Adrenal gland (tissue), 19 donors: ENCODE measurements at regions of chr7 and their contacts with region 1.

Region 1: GRCh38 chr7:120554960-120555571 is 282.1 kb downstream of the KCND2 start:
- DNase-seq: peak; percentile 34 to 64 (median 38)
- H3K4me3 ChIP-seq: no peak overlapping the region
- H3K27ac ChIP-seq: no peak overlapping the region
- H3K4me1 ChIP-seq: no peaks in the 10 kb centered on the region
- H3K27me3 ChIP-seq: no peaks in the 10 kb centered on the region
- CTCF ChIP-seq: peak in 5 of 6 experiments; percentile 45 to 63 (median 55)
- POLR2A ChIP-seq: no peak

Region 2: GRCh38 chr7:119270045-119270464 is 1285.0 kb before region 1 on chr7:
- intact Hi-C with region 1: loop called in 1 of 2 experiments (anchors 10 kb)
- DNase-seq: peak; percentile 30 to 80 (median 51)
- H3K4me3 ChIP-seq: no peak overlapping the region
- H3K27ac ChIP-seq: no peak overlapping the region
- H3K4me1 ChIP-seq: no peaks in the 10 kb centered on the region
- H3K27me3 ChIP-seq: no peaks in the 10 kb centered on the region
- CTCF ChIP-seq: peak; percentile 52 to 71 (median 62)
- POLR2A ChIP-seq: no peak